ENCODE measurements at regions of chr2 and their contacts with region 1.

Region 1: GRCh38 chr2:208175069-208175839 is 11.9 kb upstream of the CRYGA start:
- ATAC-seq: peak; percentile 89 to 100 (median 100)
- H3K4me3 ChIP-seq: no peak overlapping the region
- H3K27ac ChIP-seq: no peak overlapping the region
- H3K4me1 ChIP-seq: peaks cover 0 to 4% of the 10 kb centered on the region in 2 donors

Region 2: GRCh38 chr2:208249241-208249640 is 74.0 kb after region 1 on chr2:
- in situ Hi-C with region 1: loop called in 1 of 9 experiments (anchors 10 kb)
- ATAC-seq: peak in 1 of 8 experiments; percentile 37
- H3K4me3 ChIP-seq: no peak overlapping the region
- H3K27ac ChIP-seq: no peak overlapping the region
- H3K4me1 ChIP-seq: peaks cover 14 to 21% of the 10 kb centered on the region in 2 donors

Measured in motor neuron (in vitro differentiated cells).